ENCODE measurements at regions of chr2 and their contacts with region 1.

Region 1: GRCh38 chr2:47906157-47907038 is at the start of gene FBXO11:
- DNase-seq: peak; percentile 99
- H3K4me3 ChIP-seq: peak within 1 kb of the TSS; percentile 82 to 96 (median 89)
- H3K27ac ChIP-seq: peak within 1 kb of the TSS; percentile 91
- H3K4me1 ChIP-seq: peaks cover 8% of the 10 kb centered on the region
- H3K27me3 ChIP-seq: no peaks in the 10 kb centered on the region
- CTCF ChIP-seq: peak; percentile 51 to 64
- total RNA-seq, gene FBXO11: 35.0 to 65.5 TPM

Region 2: DNA sequence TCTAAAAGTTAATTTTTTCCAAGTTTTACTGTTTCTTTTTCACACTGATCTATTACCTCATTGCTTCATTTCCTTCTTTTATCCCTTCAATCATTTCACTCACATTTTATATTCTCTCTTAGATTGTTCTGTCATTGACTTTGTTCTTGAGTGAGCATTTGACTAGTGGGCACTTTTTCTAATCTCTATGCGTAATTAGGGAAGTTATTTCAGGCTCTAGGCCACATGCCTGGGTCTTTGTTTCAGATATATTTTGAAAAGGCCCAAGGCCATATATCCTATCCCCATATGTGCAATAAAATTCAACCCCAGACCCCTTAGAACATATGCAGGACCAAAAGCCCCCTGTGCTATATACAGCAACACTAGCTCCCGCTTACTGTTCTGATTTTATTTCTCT is 62.2 kb before region 1 on chr2:
- CTCF ChIA-PET with region 1: no interaction called
- dilution Hi-C with region 1: no loop called
- in situ Hi-C with region 1: no loop called
- intact Hi-C with region 1: no loop called
- DNase-seq: no peak
- H3K4me3 ChIP-seq: no peak overlapping the region
- H3K27ac ChIP-seq: no peak overlapping the region
- H3K4me1 ChIP-seq: no peaks in the 10 kb centered on the region
- H3K27me3 ChIP-seq: no peaks in the 10 kb centered on the region
- CTCF ChIP-seq: no peak

Region 3: GRCh38 chr2:47867205-47867604 is 39.2 kb before region 1 on chr2:
- CTCF ChIA-PET with region 1: no interaction called
- dilution Hi-C with region 1: no loop called
- in situ Hi-C with region 1: no loop called
- intact Hi-C with region 1: loop called (anchors 5 kb)
- DNase-seq: peak; percentile 77
- H3K4me3 ChIP-seq: no peak overlapping the region
- H3K27ac ChIP-seq: no peak overlapping the region
- H3K4me1 ChIP-seq: peaks cover 11% of the 10 kb centered on the region
- H3K27me3 ChIP-seq: no peaks in the 10 kb centered on the region
- CTCF ChIP-seq: no peak

Measured in mammary epithelial cell (primary cell).